ENCODE measurements at regions of chr11 and their contacts with region 1.

Region 1: DNA sequence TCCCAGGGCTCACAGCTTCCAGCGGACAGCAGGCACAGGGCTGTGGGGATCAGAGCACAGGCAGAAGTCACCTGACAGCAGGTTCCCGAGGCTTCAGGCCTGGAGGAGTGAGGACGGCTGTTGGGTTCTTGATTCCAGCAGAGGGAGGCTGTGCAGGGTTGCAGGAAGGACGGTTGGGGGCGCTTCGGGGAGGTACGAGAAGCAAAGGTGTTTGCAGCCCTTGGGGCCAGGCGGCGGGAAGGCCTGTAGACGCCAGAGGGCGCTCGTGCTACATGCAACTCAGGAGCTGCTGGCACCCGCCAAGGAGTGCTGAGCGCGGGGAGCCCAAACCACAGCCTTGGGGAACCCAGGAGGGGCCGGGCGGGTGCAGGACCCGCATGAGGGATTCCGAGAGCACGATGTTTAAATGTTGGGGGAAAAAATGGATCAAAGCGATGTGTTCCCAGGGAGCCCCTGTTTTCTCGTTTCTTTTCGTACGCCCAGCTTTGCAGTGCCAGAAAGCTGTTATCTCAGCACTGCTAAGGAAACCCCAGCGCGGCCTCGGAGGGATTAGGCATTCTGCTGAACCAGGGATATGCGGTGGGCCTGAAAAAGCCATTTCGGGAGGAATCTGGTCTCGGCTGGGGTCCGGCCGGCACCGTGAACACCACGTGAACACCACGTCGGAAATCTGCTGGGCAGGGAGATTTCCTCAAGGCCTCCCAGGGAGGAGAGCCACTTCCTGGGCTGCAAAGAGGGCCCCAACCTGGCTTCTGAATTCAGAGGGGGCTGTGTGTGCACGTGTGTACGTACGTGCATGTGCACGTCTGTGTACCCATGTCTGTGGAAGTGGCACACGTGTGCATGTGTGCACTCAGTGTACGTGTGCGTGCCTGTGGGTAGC is 88.1 kb downstream of the KCNQ1 start:
- DNase-seq: peak; percentile 83 to 90 (median 87)
- H3K4me3 ChIP-seq: peak overlapping the region; percentile 45
- H3K4me3 Mint-ChIP-seq: peak overlapping the region; percentile 56 to 87 (median 70)
- H3K27ac ChIP-seq: peak overlapping the region; percentile 12
- H3K27ac Mint-ChIP-seq: peak overlapping the region in 3 of 8 donors; percentile 21 to 48 (median 29)
- H3K4me1 ChIP-seq: peaks cover 18% of the 10 kb centered on the region
- H3K4me1 Mint-ChIP-seq: peaks cover 11 to 15% (median 12%) of the 10 kb centered on the region in 3 donors
- H3K27me3 ChIP-seq: no peaks in the 10 kb centered on the region
- H3K27me3 Mint-ChIP-seq: peaks cover 1 to 2% of the 10 kb centered on the region in 2 donors

Region 2: DNA sequence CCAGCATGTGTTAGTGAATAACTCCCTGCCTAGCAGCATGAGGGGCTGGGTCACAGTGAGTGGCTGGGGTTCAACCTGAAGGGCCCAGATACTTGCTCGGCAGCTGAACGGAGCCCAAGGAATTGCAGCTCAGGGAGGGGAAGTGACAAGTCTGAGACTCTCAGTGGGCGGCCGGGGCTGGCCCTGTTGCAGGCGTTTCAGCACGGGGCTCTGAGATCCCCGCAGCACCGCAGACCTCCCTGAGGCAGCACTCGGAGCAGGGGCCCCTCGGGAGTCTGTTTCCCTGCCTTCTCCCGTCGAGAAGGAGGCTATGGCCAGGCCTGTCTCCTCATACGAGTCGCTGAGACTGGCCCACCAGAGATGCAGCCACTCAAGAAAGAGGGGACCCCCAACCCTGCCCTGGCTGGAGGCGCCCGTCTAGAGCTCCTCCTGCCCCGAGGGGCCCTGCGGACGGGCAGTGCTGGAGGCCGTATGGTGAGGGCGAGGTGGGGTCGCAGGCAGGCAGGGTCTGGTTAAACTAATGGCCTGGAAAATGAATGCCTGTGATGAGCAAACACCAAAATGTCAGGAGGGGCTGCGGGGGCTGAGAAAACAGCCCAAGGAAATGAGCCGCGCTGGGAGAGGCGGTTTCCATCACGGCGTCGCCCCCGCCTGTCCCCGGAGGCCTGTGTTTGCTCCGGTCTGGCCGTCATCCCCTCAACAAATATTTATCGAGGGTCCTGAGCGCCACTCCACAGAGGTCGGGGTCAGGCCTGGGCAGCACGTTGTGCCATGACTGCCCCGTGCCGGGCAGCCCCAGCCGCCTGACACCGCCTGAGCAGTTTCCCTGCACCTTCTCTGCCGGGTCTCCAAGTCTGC is 123.1 kb before region 1 on chr11:
- CTCF ChIA-PET with region 1: no interaction called
- POLR2A ChIA-PET with region 1: no interaction called
- DNase-seq: no peak
- H3K4me3 ChIP-seq: no peak overlapping the region
- H3K4me3 Mint-ChIP-seq: no peak overlapping the region
- H3K27ac ChIP-seq: no peak overlapping the region
- H3K27ac Mint-ChIP-seq: no peak overlapping the region
- H3K4me1 ChIP-seq: no peaks in the 10 kb centered on the region
- H3K4me1 Mint-ChIP-seq: no peaks in the 10 kb centered on the region
- H3K27me3 ChIP-seq: no peaks in the 10 kb centered on the region
- H3K27me3 Mint-ChIP-seq: no peaks in the 10 kb centered on the region

Region 3: DNA sequence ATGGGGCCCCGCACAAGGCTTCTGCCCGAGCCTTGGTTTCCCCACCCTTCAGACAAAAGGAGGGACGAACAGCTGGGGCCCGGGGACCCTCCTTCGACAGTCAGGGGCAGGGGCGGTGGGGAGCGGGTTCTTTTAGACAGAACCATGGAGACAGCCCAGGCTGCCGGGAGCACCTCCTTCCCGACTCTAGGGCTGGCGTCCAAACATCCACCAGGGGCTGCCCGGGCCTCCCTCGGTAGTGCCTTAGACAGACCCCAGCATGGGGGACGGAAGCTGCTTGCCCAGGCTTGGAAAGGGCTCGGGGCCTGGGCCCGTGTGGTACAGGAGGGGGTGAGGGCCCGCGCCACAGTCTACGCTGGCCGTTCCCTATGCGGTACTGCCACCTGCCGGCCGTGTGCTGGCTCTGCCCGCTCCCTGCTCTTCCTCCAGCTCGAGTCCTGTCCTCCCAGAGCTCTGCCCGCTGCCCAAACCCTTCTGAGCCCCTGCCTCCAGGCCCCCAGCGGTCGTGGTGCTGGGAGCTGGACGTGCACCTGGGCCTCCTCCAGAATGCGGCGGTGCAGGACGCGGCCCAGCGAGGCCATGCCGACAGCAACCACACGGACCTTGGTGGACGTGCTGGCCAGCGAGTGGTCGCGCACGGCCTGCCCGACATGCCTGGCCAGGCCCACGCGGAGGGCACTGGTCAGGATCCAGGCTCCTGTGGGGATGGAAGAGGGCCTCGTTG is 112.3 kb before region 1 on chr11:
- CTCF ChIA-PET with region 1: interaction called, 146 read pairs
- POLR2A ChIA-PET with region 1: no interaction called
- DNase-seq: peak; percentile 60 to 78 (median 67)
- H3K4me3 ChIP-seq: no peak overlapping the region
- H3K4me3 Mint-ChIP-seq: no peak overlapping the region
- H3K27ac ChIP-seq: no peak overlapping the region
- H3K27ac Mint-ChIP-seq: peak overlapping the region in 1 of 8 donors; percentile 24
- H3K4me1 ChIP-seq: peaks cover 9% of the 10 kb centered on the region
- H3K4me1 Mint-ChIP-seq: peaks cover 0 to 3% (median 2%) of the 10 kb centered on the region in 3 donors
- H3K27me3 ChIP-seq: no peaks in the 10 kb centered on the region
- H3K27me3 Mint-ChIP-seq: no peaks in the 10 kb centered on the region

Region 4: GRCh38 chr11:2440646-2441045 is 92.3 kb before region 1 on chr11:
- CTCF ChIA-PET with region 1: interaction called, 10 read pairs
- POLR2A ChIA-PET with region 1: no interaction called
- DNase-seq: peak in 1 of 5 donors; percentile 30
- H3K4me3 ChIP-seq: no peak overlapping the region
- H3K4me3 Mint-ChIP-seq: peak overlapping the region in 1 of 7 donors; percentile 63
- H3K27ac ChIP-seq: no peak overlapping the region
- H3K27ac Mint-ChIP-seq: no peak overlapping the region
- H3K4me1 ChIP-seq: peaks cover 24% of the 10 kb centered on the region
- H3K4me1 Mint-ChIP-seq: peaks cover 17 to 25% (median 22%) of the 10 kb centered on the region in 3 donors
- H3K27me3 ChIP-seq: no peaks in the 10 kb centered on the region
- H3K27me3 Mint-ChIP-seq: peaks cover 10 to 11% of the 10 kb centered on the region in 2 donors

Region 5: GRCh38 chr11:2559527-2560311 is 26.8 kb after region 1 on chr11:
- CTCF ChIA-PET with region 1: no interaction called
- POLR2A ChIA-PET with region 1: no interaction called
- DNase-seq: peak in 1 of 5 donors; percentile 42
- H3K4me3 ChIP-seq: no peak overlapping the region
- H3K4me3 Mint-ChIP-seq: no peak overlapping the region
- H3K27ac ChIP-seq: no peak overlapping the region
- H3K27ac Mint-ChIP-seq: peak overlapping the region in 1 of 8 donors; percentile 24
- H3K4me1 ChIP-seq: no peaks in the 10 kb centered on the region
- H3K4me1 Mint-ChIP-seq: no peaks in the 10 kb centered on the region
- H3K27me3 ChIP-seq: no peaks in the 10 kb centered on the region
- H3K27me3 Mint-ChIP-seq: peaks cover 0 to under 1% of the 10 kb centered on the region in 2 donors

Region 6: DNA sequence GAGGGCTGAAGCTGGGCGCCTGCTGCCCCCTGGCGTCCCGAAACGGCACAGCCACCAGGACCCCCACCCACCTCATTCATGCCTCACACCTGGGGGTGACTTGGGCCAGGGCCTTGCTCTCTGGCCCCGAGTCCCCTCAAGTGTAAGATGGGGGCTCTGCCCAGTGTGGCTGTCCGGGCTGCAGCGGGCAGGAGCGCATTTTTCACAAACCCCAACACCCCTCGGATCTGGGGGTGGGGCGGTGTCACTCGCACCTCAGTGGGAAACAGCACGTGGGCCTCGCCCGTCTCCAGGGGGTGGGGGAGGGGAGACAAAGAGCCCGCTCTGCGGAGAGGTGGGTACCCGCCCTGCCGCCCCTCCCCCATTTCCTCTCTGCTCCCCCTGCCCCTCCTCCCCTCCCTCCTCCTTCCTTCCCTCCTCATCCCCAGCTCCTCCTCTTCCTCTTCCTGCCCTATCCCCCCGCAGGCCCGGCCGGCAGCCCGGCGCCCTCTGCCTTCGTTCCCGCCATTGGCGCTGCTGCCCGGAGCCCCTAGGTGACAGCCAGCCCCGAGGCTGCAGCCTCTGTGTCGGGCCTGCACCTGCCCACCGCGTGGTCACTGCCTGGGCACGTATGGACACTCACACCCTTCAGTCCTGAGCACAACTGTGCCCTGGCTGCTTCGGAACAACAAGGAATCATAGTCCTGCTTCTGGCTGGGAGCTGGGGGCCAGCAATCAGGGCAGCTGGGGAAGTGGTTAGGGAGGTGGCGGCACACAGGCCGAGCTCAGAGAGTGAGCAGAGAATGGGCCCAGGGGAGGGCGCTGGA is 359.5 kb after region 1 on chr11:
- CTCF ChIA-PET with region 1: interaction called, 345 read pairs
- POLR2A ChIA-PET with region 1: interaction called, 13 read pairs
- DNase-seq: peak; percentile 38 to 73 (median 46)
- H3K4me3 ChIP-seq: peak overlapping the region; percentile 63
- H3K4me3 Mint-ChIP-seq: peak overlapping the region; percentile 62 to 91 (median 75)
- H3K27ac ChIP-seq: peak overlapping the region; percentile 71
- H3K27ac Mint-ChIP-seq: peak overlapping the region; percentile 55 to 91 (median 82)
- H3K4me1 ChIP-seq: peaks cover 31% of the 10 kb centered on the region
- H3K4me1 Mint-ChIP-seq: peaks cover 20 to 34% (median 24%) of the 10 kb centered on the region in 3 donors
- H3K27me3 ChIP-seq: no peaks in the 10 kb centered on the region
- H3K27me3 Mint-ChIP-seq: no peaks in the 10 kb centered on the region

Region 7: GRCh38 chr11:2930704-2931428 is 397.9 kb after region 1 on chr11:
- CTCF ChIA-PET with region 1: interaction called, 48 read pairs
- POLR2A ChIA-PET with region 1: no interaction called
- DNase-seq: peak in 2 of 5 donors; percentile 18 to 63
- H3K4me3 ChIP-seq: peak overlapping the region; percentile 56
- H3K4me3 Mint-ChIP-seq: peak overlapping the region; percentile 38 to 90 (median 82)
- H3K27ac ChIP-seq: peak overlapping the region; percentile 31
- H3K27ac Mint-ChIP-seq: peak overlapping the region in 5 of 8 donors; percentile 11 to 90 (median 86)
- H3K4me1 ChIP-seq: peaks cover 25% of the 10 kb centered on the region
- H3K4me1 Mint-ChIP-seq: peaks cover 20 to 41% (median 22%) of the 10 kb centered on the region in 3 donors
- H3K27me3 ChIP-seq: peaks cover 6% of the 10 kb centered on the region
- H3K27me3 Mint-ChIP-seq: peaks cover 17 to 21% of the 10 kb centered on the region in 2 donors

Region 8: GRCh38 chr11:3091791-3092602 is 559.1 kb after region 1 on chr11:
- CTCF ChIA-PET with region 1: interaction called, 87 read pairs
- POLR2A ChIA-PET with region 1: no interaction called
- DNase-seq: peak; percentile 58 to 81 (median 65)
- H3K4me3 ChIP-seq: no peak overlapping the region
- H3K4me3 Mint-ChIP-seq: peak overlapping the region in 1 of 7 donors; percentile 34
- H3K27ac ChIP-seq: no peak overlapping the region
- H3K27ac Mint-ChIP-seq: peak overlapping the region in 1 of 8 donors; percentile 38
- H3K4me1 ChIP-seq: no peaks in the 10 kb centered on the region
- H3K4me1 Mint-ChIP-seq: peaks cover 0 to 3% (median 2%) of the 10 kb centered on the region in 3 donors
- H3K27me3 ChIP-seq: no peaks in the 10 kb centered on the region
- H3K27me3 Mint-ChIP-seq: peaks cover 3 to 6% of the 10 kb centered on the region in 2 donors